Sigmoid colon (tissue), 7 donors: ENCODE measurements at regions of chr3 and their contacts with region 1.

Region 1: DNA sequence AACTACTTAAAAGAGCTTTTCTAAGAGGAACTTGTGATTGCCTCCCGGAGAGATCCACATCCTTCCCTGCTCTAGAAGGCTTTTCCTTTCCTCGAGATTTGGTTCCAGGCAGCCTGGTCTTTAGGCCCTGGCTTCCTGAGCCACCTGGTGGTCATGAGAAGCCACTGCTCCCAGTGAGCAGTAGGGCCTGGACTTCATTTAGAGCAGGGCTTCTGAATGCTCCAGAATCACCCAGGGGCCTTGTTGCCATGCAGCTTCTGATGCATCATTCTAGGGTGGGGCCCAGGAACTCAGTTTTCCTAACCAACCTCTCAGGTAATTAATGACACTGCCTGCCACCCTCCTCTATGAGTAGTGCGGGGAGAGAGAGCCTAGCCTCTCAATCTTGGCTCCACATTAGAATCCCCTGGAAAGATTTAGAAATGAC is 29.6 kb downstream of the PSMD6 start:
- DNase-seq: peak; percentile 85
- H3K4me3 ChIP-seq: no peak overlapping the region
- H3K27ac ChIP-seq: no peak overlapping the region
- H3K4me1 ChIP-seq: peaks cover 0 to 3% (median 0%) of the 10 kb centered on the region in 4 donors
- H3K27me3 ChIP-seq: no peaks in the 10 kb centered on the region
- CTCF ChIP-seq: peak; percentile 91 to 97 (median 94)
- EP300 ChIP-seq: no peak
- POLR2A ChIP-seq: no peak

Region 2: DNA sequence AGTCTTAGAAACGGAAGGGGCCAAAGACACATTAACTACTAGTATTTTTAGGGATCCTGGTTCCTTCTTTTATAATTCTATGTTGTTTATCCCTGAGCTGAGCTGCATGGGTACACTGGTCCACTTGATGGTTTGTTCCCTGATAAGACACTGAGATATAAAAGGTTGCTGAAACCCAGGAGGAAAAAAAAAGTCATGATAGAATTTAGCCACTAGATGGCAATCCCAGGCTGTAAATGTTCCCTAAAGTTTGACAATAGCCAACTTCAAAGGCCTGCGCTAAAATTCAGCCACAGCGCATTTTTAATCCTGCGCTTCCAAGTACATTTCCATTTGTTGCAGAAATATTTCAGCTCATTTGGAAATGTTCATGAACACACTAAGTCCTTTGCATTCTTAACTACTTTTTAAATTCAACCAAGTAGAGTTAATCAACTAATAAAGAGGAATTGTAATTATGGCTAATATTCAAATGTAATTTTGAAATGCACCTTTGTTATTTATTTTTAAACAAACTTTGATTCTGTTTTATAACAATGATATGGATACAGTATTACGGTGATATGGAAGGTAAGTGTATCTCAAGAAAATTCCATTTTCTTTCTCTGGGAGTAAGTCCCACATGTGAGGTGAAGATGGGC is 1371.0 kb before region 1 on chr3:
- intact Hi-C with region 1: loop called (anchors 5 kb)
- DNase-seq: no peak
- H3K4me3 ChIP-seq: no peak overlapping the region
- H3K27ac ChIP-seq: no peak overlapping the region
- H3K4me1 ChIP-seq: no peaks in the 10 kb centered on the region
- H3K27me3 ChIP-seq: peaks cover 0 to 2% (median 0%) of the 10 kb centered on the region in 3 donors
- CTCF ChIP-seq: peak; percentile 14 to 61 (median 48)
- EP300 ChIP-seq: no peak
- POLR2A ChIP-seq: no peak

Region 3: DNA sequence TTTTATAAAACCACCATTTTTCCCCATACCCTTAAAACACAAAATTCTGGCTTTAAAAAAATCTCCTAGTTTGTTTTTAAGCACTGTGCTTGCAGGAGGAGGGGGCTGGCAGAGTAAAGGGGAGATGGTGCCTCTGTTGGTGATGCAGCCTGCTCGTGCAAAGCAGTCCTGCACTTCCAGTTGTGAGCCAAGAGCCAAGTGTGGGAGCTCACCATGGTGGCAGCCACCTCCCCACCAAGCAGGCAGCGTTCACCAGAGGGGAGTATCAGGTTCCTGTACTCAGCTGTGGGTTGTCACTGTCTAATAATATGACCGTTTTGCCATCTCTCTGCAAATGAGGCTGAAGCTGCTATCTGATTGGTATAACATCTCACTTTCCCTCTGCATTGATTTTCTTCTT is 550.7 kb before region 1 on chr3:
- intact Hi-C with region 1: no loop called
- DNase-seq: no peak
- H3K4me3 ChIP-seq: no peak overlapping the region
- H3K27ac ChIP-seq: no peak overlapping the region
- H3K4me1 ChIP-seq: no peaks in the 10 kb centered on the region
- H3K27me3 ChIP-seq: no peaks in the 10 kb centered on the region
- CTCF ChIP-seq: no peak
- EP300 ChIP-seq: no peak
- POLR2A ChIP-seq: no peak

Region 4: DNA sequence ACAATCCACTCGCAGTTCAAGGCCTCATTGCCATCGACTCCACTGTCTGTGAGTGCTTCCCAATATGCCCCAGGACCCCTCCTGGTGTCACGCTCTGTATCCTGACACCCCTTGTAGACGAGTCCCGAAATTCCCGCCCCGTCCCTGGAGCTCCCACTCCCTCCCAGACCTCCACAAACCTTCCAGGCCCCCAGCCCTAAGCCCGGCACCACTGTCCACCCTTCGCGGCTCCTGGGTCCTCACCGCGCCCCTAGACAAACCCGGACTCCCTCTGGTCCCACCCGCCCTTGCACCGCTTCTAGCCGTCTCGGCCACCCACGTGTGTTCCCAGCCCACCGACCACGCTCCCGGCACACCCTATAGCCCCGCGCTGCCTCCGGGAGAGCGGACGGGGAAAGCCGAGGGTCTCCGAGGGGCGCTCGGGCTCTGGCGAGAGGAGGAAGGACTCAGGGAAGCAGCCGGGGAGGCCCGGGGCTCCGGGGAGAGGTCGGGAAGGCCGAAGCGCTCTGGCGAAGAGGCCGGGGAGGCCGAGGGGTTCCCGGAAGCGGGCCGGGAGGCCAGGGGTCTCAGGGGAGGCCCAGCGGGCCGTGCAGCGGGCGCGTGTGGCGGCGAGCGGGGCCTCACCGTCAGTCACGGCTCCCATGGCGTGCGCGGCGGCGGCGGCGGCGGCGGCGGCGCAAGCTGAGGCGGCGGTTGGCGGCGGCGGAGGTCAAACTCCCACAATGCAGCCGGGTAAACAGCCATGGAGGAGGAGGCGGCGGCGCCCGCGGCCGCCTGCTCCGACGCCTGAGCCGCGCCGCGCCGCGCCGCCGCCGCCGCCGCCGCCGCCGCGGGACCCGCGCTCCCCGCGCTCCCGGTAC is 130.3 kb before region 1 on chr3 and contains the starts of genes ATXN7 and THOC7:
- intact Hi-C with region 1: loop called (anchors 5 kb)
- DNase-seq: peak; percentile 83
- H3K4me3 ChIP-seq: peak within 1 kb of the TSS; percentile 95 to 99 (median 98)
- H3K27ac ChIP-seq: peak within 1 kb of the TSS; percentile 84 to 95 (median 94)
- H3K4me1 ChIP-seq: peaks cover 0 to 33% (median 25%) of the 10 kb centered on the region in 4 donors
- H3K27me3 ChIP-seq: no peaks in the 10 kb centered on the region
- CTCF ChIP-seq: no peak
- EP300 ChIP-seq: no peak
- POLR2A ChIP-seq: no peak
- total RNA-seq, gene ATXN7: 17.8 to 32.7 (median 27.3) TPM
- total RNA-seq, gene THOC7: 76.6 to 129 (median 115) TPM

Region 5: GRCh38 chr3:63911873-63912767 is 81.5 kb before region 1 on chr3 and contains the start of gene SCAANT1:
- intact Hi-C with region 1: loop called (anchors 2 kb)
- DNase-seq: peak; percentile 97
- H3K4me3 ChIP-seq: peak within 1 kb of the TSS; percentile 44 to 93 (median 76)
- H3K27ac ChIP-seq: peak within 1 kb of the TSS; percentile 97 to 99 (median 98)
- H3K4me1 ChIP-seq: peaks cover 0 to 33% (median 28%) of the 10 kb centered on the region in 4 donors
- H3K27me3 ChIP-seq: no peaks in the 10 kb centered on the region
- CTCF ChIP-seq: peak in 1 of 4 experiments; percentile 10
- EP300 ChIP-seq: peak in 1 of 4 donors; percentile 28
- POLR2A ChIP-seq: peak; percentile 36 to 50
- total RNA-seq, gene SCAANT1: not detected

Region 6: DNA sequence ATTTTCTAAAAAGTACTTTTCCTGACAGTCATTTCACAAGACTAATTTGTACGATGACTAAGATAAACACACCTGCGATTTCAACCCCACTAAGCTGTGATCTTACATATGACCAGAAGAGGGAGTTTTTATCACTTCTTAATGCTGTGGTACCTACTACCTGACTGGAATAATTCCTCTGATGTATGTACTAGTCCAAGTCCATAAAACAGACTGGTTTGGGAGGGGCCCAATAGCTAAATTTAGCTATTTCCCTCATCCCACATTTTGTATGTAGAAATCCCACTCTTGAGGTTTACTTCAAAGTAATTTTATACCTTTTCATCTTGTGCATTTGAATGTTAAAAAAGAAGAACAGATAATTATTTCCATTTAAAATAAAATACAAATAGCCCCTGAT is 31.8 kb before region 1 on chr3:
- intact Hi-C with region 1: loop called (anchors 2 kb)
- DNase-seq: no peak
- H3K4me3 ChIP-seq: no peak overlapping the region
- H3K27ac ChIP-seq: peak overlapping the region in 2 of 4 donors; percentile 75 to 82
- H3K4me1 ChIP-seq: peaks cover 0 to 78% (median 50%) of the 10 kb centered on the region in 4 donors
- H3K27me3 ChIP-seq: no peaks in the 10 kb centered on the region
- CTCF ChIP-seq: peak; percentile 49 to 73 (median 68)
- EP300 ChIP-seq: no peak
- POLR2A ChIP-seq: no peak